Right cardiac atrium (tissue), 5 donors: ENCODE measurements at regions of chr7 and their contacts with region 1.

Region 1: GRCh38 chr7:156816943-156817572 is 75.9 kb downstream of the LMBR1 start:
- DNase-seq: no peak
- ATAC-seq: no peak
- H3K4me3 ChIP-seq: no peak overlapping the region
- H3K27ac ChIP-seq: no peak overlapping the region
- H3K4me1 ChIP-seq: no peaks in the 10 kb centered on the region
- H3K27me3 ChIP-seq: no peaks in the 10 kb centered on the region

Region 2: DNA sequence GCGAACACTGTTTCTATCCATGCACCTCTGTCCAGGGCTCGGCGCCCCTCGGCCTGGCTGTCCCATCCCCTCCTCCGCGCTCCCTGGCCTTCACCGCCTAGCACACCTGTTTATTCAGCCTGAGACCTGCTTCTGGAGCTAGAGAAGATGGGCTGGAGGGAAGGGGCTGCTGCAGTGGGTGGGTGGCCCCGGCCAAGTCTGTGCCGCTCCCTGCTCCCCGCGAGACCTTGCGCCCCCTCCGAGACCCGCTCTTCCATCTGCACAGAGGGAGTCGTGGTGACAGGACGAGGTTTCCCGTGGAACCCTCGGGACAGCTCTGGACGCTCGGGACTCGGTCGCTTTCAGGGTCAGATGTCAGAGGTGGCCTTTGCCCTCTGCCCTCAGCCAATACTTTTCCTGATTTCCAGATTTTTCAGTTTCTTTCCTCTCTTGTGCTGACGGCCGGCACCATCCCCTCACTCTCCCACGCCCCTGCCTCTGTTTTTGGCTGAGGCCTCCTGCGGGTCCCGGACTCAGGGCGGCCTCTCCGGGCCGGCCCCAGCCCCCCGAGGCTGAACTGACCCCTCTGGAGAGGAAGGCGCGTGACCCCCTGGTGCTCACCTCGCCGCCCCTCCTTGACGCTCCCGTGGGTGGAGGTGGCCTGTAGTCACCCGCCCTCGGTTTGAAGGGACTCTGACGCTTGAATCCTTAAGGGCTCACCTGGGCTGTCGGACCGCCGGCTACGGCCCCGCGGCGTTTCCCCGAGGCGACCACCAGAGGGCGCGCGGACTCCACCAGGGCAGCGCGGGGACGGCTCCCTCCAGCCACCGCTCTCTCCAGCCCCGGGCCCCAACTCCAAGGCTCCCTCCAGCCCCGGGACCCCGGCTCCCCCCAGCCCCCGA is 1020.4 kb before region 1 on chr7:
- intact Hi-C with region 1: loop called in 2 of 4 experiments (anchors 5 to 10 kb)
- DNase-seq: peak; percentile 50 to 86 (median 81)
- ATAC-seq: peak; percentile 50 to 77
- H3K4me3 ChIP-seq: no peak overlapping the region
- H3K27ac ChIP-seq: no peak overlapping the region
- H3K4me1 ChIP-seq: no peaks in the 10 kb centered on the region
- H3K27me3 ChIP-seq: no peaks in the 10 kb centered on the region

Region 3: GRCh38 chr7:157097569-157097968 is 280.5 kb after region 1 on chr7:
- intact Hi-C with region 1: no loop called
- DNase-seq: no peak
- ATAC-seq: no peak
- H3K4me3 ChIP-seq: no peak overlapping the region
- H3K27ac ChIP-seq: no peak overlapping the region
- H3K4me1 ChIP-seq: no peaks in the 10 kb centered on the region
- H3K27me3 ChIP-seq: no peaks in the 10 kb centered on the region